Activated naive CD4-positive, alpha-beta T cell treated with anti-CD3 and anti-CD28 coated beads for 36 hours (primary cell): ENCODE measurements at regions of chr4 and their contacts with region 1.

Region 1: GRCh38 chr4:98150092-98150761 is 7.0 kb upstream of the STPG2 start:
- DNase-seq: no peak
- H3K4me3 Mint-ChIP-seq: no peak overlapping the region
- H3K27ac Mint-ChIP-seq: no peak overlapping the region
- H3K4me1 Mint-ChIP-seq: peaks cover 5% of the 10 kb centered on the region
- H3K27me3 Mint-ChIP-seq: peaks cover 6% of the 10 kb centered on the region

Region 2: DNA sequence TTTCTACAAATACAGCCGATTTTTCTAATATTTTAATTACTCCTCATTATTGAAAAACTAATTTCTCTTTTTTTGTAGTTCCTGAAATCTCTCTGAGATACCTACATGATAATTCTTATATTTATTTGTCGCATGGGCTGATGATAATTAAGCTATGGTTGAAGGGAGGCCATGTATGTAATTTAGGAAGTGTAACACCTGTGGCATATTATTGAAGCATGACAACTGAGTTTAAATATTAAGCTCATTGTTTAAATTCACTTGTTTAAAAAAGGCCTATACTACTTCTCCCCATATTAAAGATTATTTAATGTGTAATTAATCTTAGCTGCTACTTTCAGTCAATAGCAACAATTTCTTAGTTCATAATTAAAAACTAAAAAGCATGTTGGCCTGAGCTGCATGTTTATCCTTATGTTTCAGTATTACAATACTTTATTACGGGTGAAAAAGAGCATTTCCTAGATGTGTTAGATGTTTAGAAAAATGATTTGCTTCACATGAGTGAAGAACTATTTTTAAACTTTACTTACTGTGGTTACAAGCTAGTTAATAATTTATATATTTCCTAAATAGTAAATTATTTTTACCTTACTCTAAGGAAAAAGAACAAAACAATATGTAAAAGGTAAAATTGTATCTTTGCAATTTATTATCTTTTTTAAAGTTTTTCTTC is 233.3 kb after region 1 on chr4:
- CTCF ChIA-PET with region 1: no interaction called
- intact Hi-C with region 1: loop called (anchors 5 kb)
- DNase-seq: no peak
- H3K4me3 Mint-ChIP-seq: no peak overlapping the region
- H3K27ac Mint-ChIP-seq: no peak overlapping the region
- H3K4me1 Mint-ChIP-seq: no peaks in the 10 kb centered on the region
- H3K27me3 Mint-ChIP-seq: no peaks in the 10 kb centered on the region